ENCODE measurements at regions of chr6 and their contacts with region 1.

Region 1: GRCh38 chr6:33248925-33249731 is 22.5 kb downstream of the VPS52 start:
- DNase-seq: peak; percentile 99
- ATAC-seq: peak; percentile 93
- H3K4me3 Mint-ChIP-seq: peak overlapping the region; percentile 91
- H3K27ac Mint-ChIP-seq: peak overlapping the region; percentile 96
- H3K4me1 Mint-ChIP-seq: peaks cover 41% of the 10 kb centered on the region
- H3K27me3 Mint-ChIP-seq: peaks cover 3% of the 10 kb centered on the region

Region 2: GRCh38 chr6:33014841-33015634 is 234.1 kb before region 1 on chr6:
- CTCF ChIA-PET with region 1: interaction called, 13 read pairs
- POLR2A ChIA-PET with region 1: no interaction called
- intact Hi-C with region 1: loop called (anchors 1 to 2 kb)
- DNase-seq: peak; percentile 53
- ATAC-seq: peak; percentile 81
- H3K4me3 Mint-ChIP-seq: no peak overlapping the region
- H3K27ac Mint-ChIP-seq: no peak overlapping the region
- H3K4me1 Mint-ChIP-seq: peaks cover 23% of the 10 kb centered on the region
- H3K27me3 Mint-ChIP-seq: no peaks in the 10 kb centered on the region

Region 3: GRCh38 chr6:33126101-33126714 is 122.9 kb before region 1 on chr6:
- CTCF ChIA-PET with region 1: interaction called, 77 read pairs
- POLR2A ChIA-PET with region 1: interaction called, 3 read pairs
- intact Hi-C with region 1: loop called in 1 of 2 experiments (anchors 1 kb)
- DNase-seq: peak; percentile 83
- ATAC-seq: peak; percentile 42
- H3K4me3 Mint-ChIP-seq: no peak overlapping the region
- H3K27ac Mint-ChIP-seq: no peak overlapping the region
- H3K4me1 Mint-ChIP-seq: no peaks in the 10 kb centered on the region
- H3K27me3 Mint-ChIP-seq: peaks cover 7% of the 10 kb centered on the region

Region 4: DNA sequence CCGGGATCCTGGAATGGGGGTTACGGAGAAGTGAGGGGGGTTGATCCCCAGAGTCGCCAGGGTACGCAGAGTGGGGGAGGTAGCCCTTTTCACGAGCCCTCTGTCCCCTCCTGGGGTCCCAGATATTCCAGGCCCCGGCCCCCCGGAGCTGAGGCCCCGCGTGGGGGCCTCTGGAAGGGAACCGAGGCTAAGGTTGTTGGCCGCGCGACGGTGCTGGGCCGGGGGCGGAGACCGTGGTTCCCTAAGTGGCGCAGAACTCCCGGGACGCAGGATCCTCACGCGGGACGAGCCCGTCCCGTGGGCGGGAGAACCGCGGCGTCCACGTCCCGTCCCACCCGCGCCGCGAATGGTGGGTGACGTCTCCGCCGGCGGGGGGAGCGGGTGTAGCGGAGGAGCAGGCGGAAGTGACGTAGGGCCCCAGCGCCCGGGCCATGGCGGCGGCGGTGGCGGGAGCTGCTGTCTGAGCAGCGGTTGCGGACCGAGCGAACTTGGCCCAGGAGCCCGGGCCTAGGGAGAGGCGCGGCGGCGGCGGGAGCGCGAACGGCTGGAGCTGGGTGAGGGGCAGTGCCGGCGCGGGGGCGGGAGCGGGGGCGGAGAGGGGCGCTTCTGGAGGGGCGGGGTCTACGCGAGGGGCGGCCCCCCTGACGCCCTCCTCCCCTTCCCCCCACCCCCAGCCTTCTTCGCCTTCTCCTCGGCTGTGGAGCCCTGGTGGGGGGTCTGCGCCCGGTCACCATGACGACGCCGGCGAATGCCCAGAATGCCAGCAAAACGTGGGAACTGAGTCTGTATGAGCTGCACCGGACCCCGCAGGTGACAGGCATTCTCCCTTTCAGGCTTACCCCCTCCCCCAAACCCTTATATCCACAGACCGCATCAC is 40.8 kb before region 1 on chr6 and contains the start of gene RING1:
- CTCF ChIA-PET with region 1: interaction called, 22 read pairs
- POLR2A ChIA-PET with region 1: interaction called, 19 read pairs
- intact Hi-C with region 1: loop called (anchors 1 kb)
- DNase-seq: peak; percentile 92
- ATAC-seq: peak; percentile 20
- H3K4me3 Mint-ChIP-seq: peak within 1 kb of the TSS; percentile 80
- H3K27ac Mint-ChIP-seq: peak within 1 kb of the TSS; percentile 89
- H3K4me1 Mint-ChIP-seq: peaks cover 55% of the 10 kb centered on the region
- H3K27me3 Mint-ChIP-seq: peaks cover 8% of the 10 kb centered on the region
- total RNA-seq, gene RING1: 28.3 to 39.3 TPM

Region 5: DNA sequence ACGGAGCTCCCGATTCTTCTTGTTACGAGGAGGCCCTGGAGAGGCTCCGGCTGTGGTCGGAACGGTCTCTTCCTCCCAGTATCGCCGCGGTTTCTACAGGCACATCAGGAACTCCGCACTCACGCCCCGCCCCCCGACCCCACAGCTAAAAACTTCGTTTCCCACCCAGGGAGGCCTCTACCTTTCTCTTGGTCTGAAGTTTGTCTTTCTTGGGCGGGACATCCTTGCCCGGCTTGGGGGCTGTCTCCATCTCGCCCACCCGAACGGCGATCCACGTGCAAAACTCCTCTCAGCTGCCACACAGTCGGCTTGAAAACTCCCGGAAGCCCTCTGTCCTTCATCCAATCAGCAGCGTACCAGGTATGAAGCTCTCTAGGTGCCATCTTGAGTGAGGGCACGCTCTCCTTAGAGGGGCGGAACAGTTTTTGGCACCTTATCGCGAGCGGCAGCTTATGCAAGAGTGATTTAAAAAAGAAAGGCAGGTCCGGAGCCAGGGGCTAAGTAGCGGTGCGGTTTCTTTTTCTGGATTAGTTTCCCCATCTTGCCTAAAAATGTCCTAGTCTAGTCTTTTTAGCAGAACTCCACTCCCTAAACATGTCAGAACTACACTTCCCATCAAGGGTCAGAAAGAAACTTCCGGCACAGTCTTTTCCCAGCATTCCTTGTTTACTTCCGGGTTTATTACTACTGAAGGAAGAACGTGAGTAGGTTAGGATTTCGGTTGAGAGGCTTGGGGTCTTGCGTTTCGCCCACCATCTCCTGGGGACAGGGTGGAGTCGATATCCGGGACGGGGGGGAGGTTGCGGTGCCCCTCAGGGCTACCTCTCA is 40.0 kb after region 1 on chr6 and contains the starts of genes PFDN6 and WDR46:
- CTCF ChIA-PET with region 1: interaction called, 7 read pairs
- POLR2A ChIA-PET with region 1: interaction called, 3 read pairs
- intact Hi-C with region 1: loop called in 1 of 2 experiments (anchors 1 kb)
- DNase-seq: peak; percentile 87
- ATAC-seq: peak; percentile 98
- H3K4me3 Mint-ChIP-seq: peak within 1 kb of the TSS; percentile 98
- H3K27ac Mint-ChIP-seq: peak within 1 kb of the TSS; percentile 97
- H3K4me1 Mint-ChIP-seq: peaks cover 37% of the 10 kb centered on the region
- H3K27me3 Mint-ChIP-seq: no peaks in the 10 kb centered on the region
- total RNA-seq, gene PFDN6: 65.4 to 96.9 TPM
- total RNA-seq, gene WDR46: 63.5 to 69.4 TPM

Region 6: GRCh38 chr6:33317669-33318425 is 68.7 kb after region 1 on chr6 and contains the start of gene ZBTB22:
- CTCF ChIA-PET with region 1: interaction called, 3 read pairs
- POLR2A ChIA-PET with region 1: interaction called, 7 read pairs
- intact Hi-C with region 1: loop called in 1 of 2 experiments (anchors 1 kb)
- DNase-seq: peak; percentile 98
- ATAC-seq: peak; percentile 69
- H3K4me3 Mint-ChIP-seq: peak within 1 kb of the TSS; percentile 80
- H3K27ac Mint-ChIP-seq: peak within 1 kb of the TSS; percentile 93
- H3K4me1 Mint-ChIP-seq: peaks cover 70% of the 10 kb centered on the region
- H3K27me3 Mint-ChIP-seq: no peaks in the 10 kb centered on the region
- total RNA-seq, gene ZBTB22: 9.0 to 9.9 TPM

Region 7: GRCh38 chr6:33356295-33356694 is 107.2 kb after region 1 on chr6:
- CTCF ChIA-PET with region 1: no interaction called
- POLR2A ChIA-PET with region 1: no interaction called
- intact Hi-C with region 1: no loop called
- DNase-seq: no peak
- ATAC-seq: no peak
- H3K4me3 Mint-ChIP-seq: no peak overlapping the region
- H3K27ac Mint-ChIP-seq: no peak overlapping the region
- H3K4me1 Mint-ChIP-seq: no peaks in the 10 kb centered on the region
- H3K27me3 Mint-ChIP-seq: no peaks in the 10 kb centered on the region

Region 8: GRCh38 chr6:33410050-33410710 is 161.1 kb after region 1 on chr6:
- CTCF ChIA-PET with region 1: no interaction called
- POLR2A ChIA-PET with region 1: no interaction called
- intact Hi-C with region 1: loop called in 1 of 2 experiments (anchors 1 kb)
- DNase-seq: peak; percentile 98
- ATAC-seq: peak; percentile 88
- H3K4me3 Mint-ChIP-seq: peak overlapping the region; percentile 80
- H3K27ac Mint-ChIP-seq: peak overlapping the region; percentile 96
- H3K4me1 Mint-ChIP-seq: peaks cover 31% of the 10 kb centered on the region
- H3K27me3 Mint-ChIP-seq: no peaks in the 10 kb centered on the region